Heart right ventricle (tissue), 16 donors: ENCODE measurements at regions of chr17 and their contacts with region 1.

Region 1: DNA sequence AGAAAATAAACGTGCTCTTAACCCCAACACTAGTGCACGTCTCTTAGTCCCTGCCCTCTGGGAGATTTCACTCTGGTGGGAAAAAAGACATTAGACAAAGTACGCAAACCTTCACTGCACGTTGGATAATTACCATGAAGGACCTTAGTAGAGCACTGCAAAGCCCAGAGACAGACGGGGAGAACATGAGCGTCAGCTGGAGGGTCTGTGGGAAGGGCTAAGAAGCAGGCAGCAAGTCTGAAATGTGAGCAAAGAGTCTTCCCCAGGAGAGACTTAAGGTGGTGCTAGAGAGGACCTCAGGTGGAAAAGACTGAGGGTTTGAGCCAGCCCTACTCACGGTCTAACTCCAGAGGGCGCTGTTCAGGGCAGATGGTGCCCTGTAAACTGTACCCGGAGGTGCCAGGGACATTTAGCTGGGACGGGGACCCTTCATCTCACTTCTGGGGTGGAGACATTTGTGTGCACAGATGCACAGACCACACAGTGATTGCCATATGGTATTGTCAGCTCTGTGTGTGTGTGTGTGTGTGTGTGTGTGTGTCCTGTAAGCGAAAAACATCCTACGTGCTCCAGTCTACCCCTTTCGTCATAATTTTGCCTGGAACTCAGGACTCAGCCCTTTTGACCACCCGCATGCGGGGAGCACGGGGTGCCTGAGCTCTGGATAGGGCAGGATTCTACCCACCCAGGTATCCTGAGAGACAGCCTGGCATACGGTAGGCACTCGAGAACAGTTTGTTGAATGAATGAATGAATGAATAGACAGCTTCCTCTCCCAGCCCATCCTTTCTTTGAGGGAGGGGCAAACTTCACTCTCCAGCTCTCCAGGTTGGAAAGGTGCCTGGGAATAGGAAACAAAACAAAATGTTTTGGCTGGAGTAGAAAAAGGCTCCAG is 10.1 kb upstream of the STAC2 start:
- DNase-seq: no peak
- ATAC-seq: peak in 1 of 8 donors; percentile 14
- H3K4me3 ChIP-seq: no peak overlapping the region
- H3K27ac ChIP-seq: no peak overlapping the region
- H3K4me1 ChIP-seq: peaks cover 3 to 25% (median 14%) of the 10 kb centered on the region in 9 donors
- H3K27me3 ChIP-seq: peaks cover 3 to 58% (median 35%) of the 10 kb centered on the region in 7 donors
- CTCF ChIP-seq: peak in 7 of 9 donors; percentile 37 to 57 (median 47)

Region 2: DNA sequence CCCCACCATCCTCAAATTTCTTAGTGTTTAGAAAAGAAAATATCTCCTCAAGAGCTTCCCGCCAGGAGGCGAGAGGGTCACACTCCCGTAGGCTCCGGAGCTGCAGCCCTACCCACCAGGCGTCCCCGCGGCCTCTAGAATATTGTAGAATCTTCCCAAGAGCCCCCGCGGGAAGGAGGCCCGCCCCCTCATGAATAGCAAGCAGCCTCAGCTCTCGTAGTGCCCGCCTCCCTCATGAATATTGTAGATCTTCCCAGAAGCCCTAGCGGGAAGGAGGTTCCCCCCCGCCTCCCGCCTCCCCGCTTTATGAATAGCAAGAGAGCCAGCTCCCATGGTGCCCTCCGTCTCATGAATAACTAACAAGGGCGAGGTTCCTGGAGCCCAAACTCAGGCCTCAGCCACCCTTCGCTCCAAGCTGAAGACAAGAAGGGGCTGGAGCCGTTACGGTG is 268.5 kb before region 1 on chr17 and contains the start of gene FBXO47:
- intact Hi-C with region 1: loop called in 3 of 10 experiments (anchors 10 kb)
- DNase-seq: peak; percentile 92 to 97
- ATAC-seq: peak; percentile 97 to 100 (median 99)
- H3K4me3 ChIP-seq: peak within 1 kb of the TSS in 9 of 10 donors; percentile 4 to 52 (median 35)
- H3K27ac ChIP-seq: peak within 1 kb of the TSS; percentile 12 to 87 (median 72)
- H3K4me1 ChIP-seq: peaks cover 0 to 11% (median 0%) of the 10 kb centered on the region in 9 donors
- H3K27me3 ChIP-seq: no peaks in the 10 kb centered on the region
- CTCF ChIP-seq: peak in 6 of 9 donors; percentile 20 to 59 (median 36)
- total RNA-seq, gene FBXO47: not detected

Region 3: GRCh38 chr17:39164675-39165143 is 71.1 kb before region 1 on chr17:
- intact Hi-C with region 1: loop called in 4 of 10 experiments (anchors 10 kb)
- DNase-seq: peak; percentile 90 to 95
- ATAC-seq: peak; percentile 86 to 94 (median 92)
- H3K4me3 ChIP-seq: peak overlapping the region; percentile 32 to 63 (median 58)
- H3K27ac ChIP-seq: peak overlapping the region in 7 of 10 donors; percentile 11 to 63 (median 36)
- H3K4me1 ChIP-seq: peaks cover 0 to 46% (median 38%) of the 10 kb centered on the region in 9 donors
- H3K27me3 ChIP-seq: peaks cover 0 to 8% (median 0%) of the 10 kb centered on the region in 7 donors
- CTCF ChIP-seq: peak; percentile 66 to 93 (median 79)

Region 4: GRCh38 chr17:39209317-39210092 is 26.3 kb before region 1 on chr17:
- intact Hi-C with region 1: loop called in 5 of 10 experiments (anchors 2 to 5 kb)
- DNase-seq: peak; percentile 68 to 74
- ATAC-seq: peak; percentile 71 to 92 (median 78)
- H3K4me3 ChIP-seq: peak overlapping the region; percentile 14 to 57 (median 50)
- H3K27ac ChIP-seq: peak overlapping the region in 6 of 10 donors; percentile 13 to 50 (median 32)
- H3K4me1 ChIP-seq: peaks cover 9 to 25% (median 18%) of the 10 kb centered on the region in 9 donors
- H3K27me3 ChIP-seq: peaks cover 0 to 17% (median 2%) of the 10 kb centered on the region in 7 donors
- CTCF ChIP-seq: no peak